Caco-2 (cell line): ENCODE measurements at regions of chr6 and their contacts with region 1.

Region 1: DNA sequence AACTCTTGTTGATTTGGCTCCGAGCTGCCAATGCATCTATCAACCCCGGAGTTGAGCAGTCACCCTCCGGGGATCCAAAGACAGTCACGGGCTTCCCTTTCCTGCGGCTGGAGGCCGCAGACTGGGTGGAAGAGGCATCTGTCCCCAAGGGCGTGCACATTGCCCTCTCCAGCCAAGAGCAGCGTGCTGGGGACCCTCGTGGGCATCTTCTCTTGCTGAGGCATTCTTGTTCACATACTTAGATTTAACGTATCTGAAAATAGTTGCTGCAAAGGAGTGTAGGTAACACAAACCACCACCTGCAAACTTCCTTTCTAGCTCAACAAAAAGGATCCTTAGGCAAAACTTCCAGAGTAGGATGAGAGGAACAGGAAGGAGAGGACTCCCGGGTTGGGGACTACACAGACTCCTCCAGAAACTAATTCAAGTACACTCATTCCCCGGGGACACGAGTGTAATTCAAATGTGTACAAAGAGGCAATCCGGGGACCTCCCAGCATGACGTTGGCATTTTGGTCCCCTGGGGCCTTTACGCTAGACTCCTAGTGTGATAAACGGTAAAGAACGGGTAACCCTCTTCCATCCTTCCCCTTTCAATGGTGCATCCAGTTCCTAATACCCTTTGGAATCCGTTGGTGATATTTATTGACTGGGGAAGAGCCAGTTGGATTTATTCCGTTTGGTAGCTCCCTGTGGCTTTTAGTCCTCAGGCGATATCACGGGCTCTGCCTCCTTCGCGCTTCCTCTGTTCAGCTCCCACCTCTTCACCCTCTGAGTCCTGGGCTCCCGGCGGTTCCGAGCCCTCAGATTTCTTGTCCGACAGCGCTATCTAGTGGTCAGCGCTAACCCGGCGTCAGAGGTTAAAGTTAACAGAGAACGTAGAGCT is 2.7 kb upstream of the COL12A1 start:
- DNase-seq: peak; percentile 73 to 83
- H3K4me3 ChIP-seq: no peak overlapping the region
- H3K4me3 Mint-ChIP-seq: peak overlapping the region; percentile 12
- H3K27ac Mint-ChIP-seq: no peak overlapping the region
- H3K4me1 ChIP-seq: peaks cover 13% of the 10 kb centered on the region
- H3K4me1 Mint-ChIP-seq: peaks cover 14% of the 10 kb centered on the region
- H3K27me3 ChIP-seq: no peaks in the 10 kb centered on the region
- H3K27me3 Mint-ChIP-seq: no peaks in the 10 kb centered on the region
- CTCF ChIP-seq: peak; percentile 79 to 81

Region 2: DNA sequence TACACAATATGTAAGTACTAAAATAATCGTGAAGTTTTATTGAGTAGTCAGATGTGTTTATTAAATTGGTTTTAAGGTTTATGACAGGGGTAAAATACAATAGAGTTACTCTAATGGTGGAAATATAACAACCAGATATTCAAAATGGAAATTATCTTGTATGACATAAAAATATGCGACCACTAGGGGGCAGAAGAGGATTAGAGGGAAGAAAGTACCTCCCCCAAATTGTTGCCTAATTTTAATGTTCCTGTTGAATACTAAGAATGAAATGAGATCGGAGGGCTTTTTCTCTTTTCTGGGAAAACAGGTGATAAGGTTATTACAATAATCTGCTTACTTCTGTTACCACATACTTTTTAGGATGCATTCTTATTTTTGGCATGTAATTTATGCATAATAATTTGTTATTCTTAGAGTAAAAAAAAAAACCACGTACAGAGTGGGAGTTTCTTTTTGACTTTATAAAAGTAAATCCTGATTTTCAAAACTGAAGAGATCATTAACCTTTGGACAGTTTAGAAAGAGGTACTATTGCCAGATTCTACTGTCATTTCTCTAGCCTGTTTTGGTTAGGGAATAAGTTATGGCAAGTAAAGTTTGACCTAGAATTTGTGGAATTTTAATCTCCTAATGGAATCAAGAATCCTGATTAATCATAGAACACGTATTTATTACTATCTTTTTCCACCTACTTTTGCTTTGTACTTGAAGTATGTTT is 1353.4 kb before region 1 on chr6:
- CTCF ChIA-PET with region 1: interaction called, 5 read pairs
- POLR2A ChIA-PET with region 1: no interaction called
- intact Hi-C with region 1: loop called (anchors 5 kb)
- DNase-seq: peak in 1 of 2 experiments; percentile 66
- H3K4me3 ChIP-seq: no peak overlapping the region
- H3K4me3 Mint-ChIP-seq: no peak overlapping the region
- H3K27ac Mint-ChIP-seq: no peak overlapping the region
- H3K4me1 ChIP-seq: no peaks in the 10 kb centered on the region
- H3K4me1 Mint-ChIP-seq: no peaks in the 10 kb centered on the region
- H3K27me3 ChIP-seq: no peaks in the 10 kb centered on the region
- H3K27me3 Mint-ChIP-seq: no peaks in the 10 kb centered on the region
- CTCF ChIP-seq: peak; percentile 46 to 64

Region 3: GRCh38 chr6:74343804-74344203 is 864.7 kb before region 1 on chr6:
- CTCF ChIA-PET with region 1: interaction called, 9 read pairs
- POLR2A ChIA-PET with region 1: no interaction called
- intact Hi-C with region 1: loop called (anchors 5 kb)
- DNase-seq: peak in 1 of 2 experiments; percentile 1
- H3K4me3 ChIP-seq: no peak overlapping the region
- H3K4me3 Mint-ChIP-seq: no peak overlapping the region
- H3K27ac Mint-ChIP-seq: no peak overlapping the region
- H3K4me1 ChIP-seq: no peaks in the 10 kb centered on the region
- H3K4me1 Mint-ChIP-seq: no peaks in the 10 kb centered on the region
- H3K27me3 ChIP-seq: no peaks in the 10 kb centered on the region
- H3K27me3 Mint-ChIP-seq: no peaks in the 10 kb centered on the region
- CTCF ChIP-seq: peak in 1 of 2 experiments; percentile 27

Region 4: DNA sequence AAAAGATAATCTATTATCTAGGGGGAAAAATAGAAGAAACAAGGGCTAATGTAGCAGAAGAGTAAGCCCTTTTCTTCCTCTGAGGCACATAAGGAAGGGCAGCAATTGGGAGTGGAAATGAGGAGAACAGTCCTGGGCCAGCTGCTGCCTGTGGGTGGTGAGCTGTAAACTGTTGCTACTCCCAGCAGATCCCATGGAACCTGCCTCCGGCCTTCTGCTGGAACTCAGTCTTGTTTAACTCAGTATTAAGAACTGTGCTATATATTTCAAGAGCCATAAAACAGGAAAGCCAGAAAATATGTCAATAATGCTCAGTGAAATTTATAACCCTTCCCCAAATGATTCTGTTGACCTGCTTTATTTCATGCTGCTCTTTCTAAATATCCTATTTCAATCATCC is 466.9 kb before region 1 on chr6:
- CTCF ChIA-PET with region 1: no interaction called
- POLR2A ChIA-PET with region 1: no interaction called
- intact Hi-C with region 1: no loop called
- DNase-seq: no peak
- H3K4me3 ChIP-seq: no peak overlapping the region
- H3K4me3 Mint-ChIP-seq: no peak overlapping the region
- H3K27ac Mint-ChIP-seq: no peak overlapping the region
- H3K4me1 ChIP-seq: no peaks in the 10 kb centered on the region
- H3K4me1 Mint-ChIP-seq: no peaks in the 10 kb centered on the region
- H3K27me3 ChIP-seq: no peaks in the 10 kb centered on the region
- H3K27me3 Mint-ChIP-seq: peaks cover 2% of the 10 kb centered on the region
- CTCF ChIP-seq: no peak

Region 5: DNA sequence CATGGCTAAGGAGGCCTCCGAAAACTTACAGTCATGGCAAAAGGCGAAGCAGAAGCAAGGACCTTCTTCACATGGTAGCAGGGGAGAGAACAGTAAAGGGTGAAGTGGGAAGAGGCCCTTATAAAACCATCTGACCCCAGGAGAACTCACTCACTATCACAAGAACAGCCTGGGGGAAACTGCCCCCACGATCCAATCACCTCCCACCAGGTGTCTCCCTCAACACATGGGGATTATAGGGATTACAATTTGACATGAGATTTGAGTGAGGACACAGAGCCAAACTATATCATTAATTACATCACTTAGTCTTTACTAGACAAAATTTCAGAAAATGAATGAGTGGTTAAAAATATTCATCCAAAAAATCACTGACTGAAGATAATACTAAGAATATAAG is 456.2 kb before region 1 on chr6:
- CTCF ChIA-PET with region 1: interaction called, 3 read pairs
- POLR2A ChIA-PET with region 1: no interaction called
- intact Hi-C with region 1: loop called (anchors 1 kb)
- DNase-seq: peak in 1 of 2 experiments; percentile 7
- H3K4me3 ChIP-seq: no peak overlapping the region
- H3K4me3 Mint-ChIP-seq: no peak overlapping the region
- H3K27ac Mint-ChIP-seq: no peak overlapping the region
- H3K4me1 ChIP-seq: no peaks in the 10 kb centered on the region
- H3K4me1 Mint-ChIP-seq: no peaks in the 10 kb centered on the region
- H3K27me3 ChIP-seq: no peaks in the 10 kb centered on the region
- H3K27me3 Mint-ChIP-seq: no peaks in the 10 kb centered on the region
- CTCF ChIP-seq: no peak

Region 6: DNA sequence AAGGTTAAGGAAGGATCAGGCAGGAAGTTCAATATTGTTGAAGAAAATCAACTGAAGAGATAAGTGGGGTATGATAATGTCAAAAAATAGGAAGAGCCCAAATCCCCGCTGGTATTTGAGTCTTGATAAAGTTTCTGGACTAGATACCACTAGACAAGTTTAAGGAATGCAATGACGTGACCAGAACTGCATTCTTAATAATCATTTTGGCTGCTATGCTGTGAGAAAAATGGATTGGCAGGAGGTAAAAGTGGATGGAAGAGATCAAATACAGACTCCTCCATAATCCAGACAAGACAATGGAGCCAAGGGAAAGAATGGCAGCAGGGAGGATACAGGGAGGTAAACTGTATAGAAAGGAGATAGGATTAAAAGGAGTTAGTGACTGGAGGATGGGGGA is 130.8 kb before region 1 on chr6:
- CTCF ChIA-PET with region 1: no interaction called
- POLR2A ChIA-PET with region 1: no interaction called
- intact Hi-C with region 1: loop called (anchors 10 kb)
- DNase-seq: no peak
- H3K4me3 ChIP-seq: no peak overlapping the region
- H3K4me3 Mint-ChIP-seq: no peak overlapping the region
- H3K27ac Mint-ChIP-seq: no peak overlapping the region
- H3K4me1 ChIP-seq: no peaks in the 10 kb centered on the region
- H3K4me1 Mint-ChIP-seq: peaks cover 7% of the 10 kb centered on the region
- H3K27me3 ChIP-seq: no peaks in the 10 kb centered on the region
- H3K27me3 Mint-ChIP-seq: no peaks in the 10 kb centered on the region
- CTCF ChIP-seq: no peak

Region 7: GRCh38 chr6:75183099-75183541 is 25.4 kb before region 1 on chr6:
- CTCF ChIA-PET with region 1: interaction called, 6 read pairs
- POLR2A ChIA-PET with region 1: no interaction called
- intact Hi-C with region 1: loop called (anchors 1 kb)
- DNase-seq: peak; percentile 81
- H3K4me3 ChIP-seq: no peak overlapping the region
- H3K4me3 Mint-ChIP-seq: peak overlapping the region; percentile 66
- H3K27ac Mint-ChIP-seq: peak overlapping the region; percentile 80
- H3K4me1 ChIP-seq: peaks cover 32% of the 10 kb centered on the region
- H3K4me1 Mint-ChIP-seq: peaks cover 31% of the 10 kb centered on the region
- H3K27me3 ChIP-seq: no peaks in the 10 kb centered on the region
- H3K27me3 Mint-ChIP-seq: no peaks in the 10 kb centered on the region
- CTCF ChIP-seq: no peak

Region 8: GRCh38 chr6:75244063-75244584 is 35.6 kb after region 1 on chr6:
- CTCF ChIA-PET with region 1: no interaction called
- POLR2A ChIA-PET with region 1: no interaction called
- intact Hi-C with region 1: no loop called
- DNase-seq: no peak
- H3K4me3 ChIP-seq: peak overlapping the region; percentile 54
- H3K4me3 Mint-ChIP-seq: peak overlapping the region; percentile 99
- H3K27ac Mint-ChIP-seq: peak overlapping the region; percentile 100
- H3K4me1 ChIP-seq: peaks cover 3% of the 10 kb centered on the region; the same call in 1 of the 2 replicates
- H3K4me1 Mint-ChIP-seq: no peaks in the 10 kb centered on the region
- H3K27me3 ChIP-seq: no peaks in the 10 kb centered on the region
- H3K27me3 Mint-ChIP-seq: no peaks in the 10 kb centered on the region
- CTCF ChIP-seq: no peak